OCI-LY7 (cell line): ENCODE measurements at regions of chr21 and their contacts with region 1.

Region 1: DNA sequence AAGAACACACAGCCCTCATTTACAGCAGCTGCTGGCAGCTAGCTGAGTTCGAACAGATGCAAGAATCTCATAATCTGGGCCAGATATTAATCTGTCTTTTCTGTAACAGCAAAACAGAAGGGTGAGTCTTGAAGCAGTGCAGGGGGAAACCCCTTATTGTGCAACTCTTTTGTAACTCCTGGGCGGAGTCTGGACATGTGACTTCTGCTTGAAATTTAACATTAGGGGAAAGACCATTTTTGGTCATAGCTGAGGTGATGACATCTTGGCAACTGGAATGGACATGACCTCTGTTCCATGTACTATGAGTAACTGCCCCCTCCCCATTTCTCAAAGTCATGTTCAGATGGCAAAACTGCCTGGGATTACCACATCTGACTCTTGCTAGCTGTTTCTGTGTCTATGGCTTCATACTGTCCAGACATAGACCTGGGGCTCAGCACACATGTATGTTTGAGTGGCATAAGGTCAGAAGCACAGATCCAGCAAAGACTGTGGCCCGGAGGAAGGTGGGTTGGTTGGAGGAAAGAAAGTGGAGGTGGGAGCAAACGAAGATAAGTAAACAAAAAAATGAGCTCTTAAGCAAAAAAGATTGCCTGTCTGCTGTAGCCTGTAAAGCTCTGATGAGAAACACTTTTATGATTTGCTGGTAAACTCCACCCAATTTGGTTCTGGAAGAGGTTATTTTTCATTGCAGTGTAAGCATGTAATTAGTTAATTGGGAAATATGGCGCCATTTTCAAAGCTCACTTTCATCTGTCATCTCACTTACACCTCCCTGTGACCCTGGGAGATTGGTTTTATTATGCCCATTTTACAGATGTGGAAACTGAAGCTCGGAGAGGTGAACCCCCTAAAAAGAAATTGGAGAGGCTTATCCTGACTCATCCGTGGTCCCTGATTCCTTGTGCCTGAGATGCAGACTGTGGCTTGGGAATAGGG is 26.1 kb downstream of the ETS2 start:
- DNase-seq: no peak
- H3K4me3 ChIP-seq: no peak overlapping the region
- H3K27ac ChIP-seq: peak overlapping the region; percentile 73
- H3K4me1 ChIP-seq: peaks cover 19% of the 10 kb centered on the region
- CTCF ChIP-seq: no peak

Region 2: DNA sequence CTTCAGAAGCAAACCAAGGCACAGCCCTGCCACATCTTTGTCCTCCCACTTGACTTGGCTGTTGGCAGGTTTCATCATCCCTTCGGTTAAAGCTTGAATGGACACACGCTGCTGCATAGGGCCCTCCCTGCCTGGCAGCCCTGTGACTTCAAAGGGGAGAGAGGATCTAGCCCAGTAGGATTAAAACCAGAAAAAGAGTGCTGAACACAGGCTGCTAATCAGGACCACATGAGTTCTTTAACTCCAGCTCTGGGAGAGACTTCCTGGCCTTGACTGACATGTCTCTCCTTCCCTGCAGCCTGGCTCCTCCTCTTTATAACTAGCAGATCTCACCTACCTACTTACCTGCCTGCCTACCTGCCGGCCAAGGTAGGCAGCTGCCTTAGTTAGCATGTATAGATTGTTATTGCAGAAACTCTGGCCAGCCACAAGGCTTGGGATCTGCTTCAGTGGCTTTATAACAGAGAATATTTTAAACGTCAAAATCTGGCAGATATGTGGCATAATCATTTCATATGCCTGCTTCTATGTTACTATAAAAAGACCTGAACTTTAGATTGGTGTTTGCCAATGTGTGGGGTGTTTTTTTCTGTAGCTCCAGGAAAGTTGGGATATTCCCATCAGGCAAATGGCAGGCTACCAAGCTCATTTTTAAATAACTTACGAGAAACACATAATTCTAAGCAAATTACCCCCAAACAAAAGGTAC is 383.0 kb before region 1 on chr21:
- CTCF ChIA-PET with region 1: no interaction called
- POLR2A ChIA-PET with region 1: no interaction called
- intact Hi-C with region 1: no loop called
- DNase-seq: no peak
- H3K4me3 ChIP-seq: no peak overlapping the region
- H3K27ac ChIP-seq: no peak overlapping the region
- H3K4me1 ChIP-seq: no peaks in the 10 kb centered on the region
- CTCF ChIP-seq: no peak

Region 3: GRCh38 chr21:38766987-38767722 is 64.6 kb before region 1 on chr21:
- CTCF ChIA-PET with region 1: no interaction called
- POLR2A ChIA-PET with region 1: interaction called, 4 read pairs
- intact Hi-C with region 1: loop called (anchors 2 kb)
- DNase-seq: peak; percentile 79
- H3K4me3 ChIP-seq: peak overlapping the region; percentile 59
- H3K27ac ChIP-seq: peak overlapping the region; percentile 77
- H3K4me1 ChIP-seq: peaks cover 21% of the 10 kb centered on the region
- CTCF ChIP-seq: no peak

Region 4: GRCh38 chr21:38883142-38883541 is 51.3 kb after region 1 on chr21:
- CTCF ChIA-PET with region 1: no interaction called
- POLR2A ChIA-PET with region 1: interaction called, 10 read pairs
- intact Hi-C with region 1: no loop called
- DNase-seq: no peak
- H3K4me3 ChIP-seq: no peak overlapping the region
- H3K27ac ChIP-seq: no peak overlapping the region
- H3K4me1 ChIP-seq: no peaks in the 10 kb centered on the region
- CTCF ChIP-seq: no peak